Activated CD4-positive, alpha-beta memory T cell treated with anti-CD3 and anti-CD28 coated beads for 36 hours (primary cell): ENCODE measurements at regions of chr19 and their contacts with region 1.

Region 1: GRCh38 chr19:18058208-18059030 is 28.3 kb downstream of the IL12RB1 start:
- DNase-seq: peak; percentile 87
- H3K4me3 Mint-ChIP-seq: peak overlapping the region; percentile 29
- H3K27ac Mint-ChIP-seq: peak overlapping the region; percentile 58
- H3K4me1 Mint-ChIP-seq: peaks cover 14% of the 10 kb centered on the region
- H3K27me3 Mint-ChIP-seq: no peaks in the 10 kb centered on the region

Region 2: DNA sequence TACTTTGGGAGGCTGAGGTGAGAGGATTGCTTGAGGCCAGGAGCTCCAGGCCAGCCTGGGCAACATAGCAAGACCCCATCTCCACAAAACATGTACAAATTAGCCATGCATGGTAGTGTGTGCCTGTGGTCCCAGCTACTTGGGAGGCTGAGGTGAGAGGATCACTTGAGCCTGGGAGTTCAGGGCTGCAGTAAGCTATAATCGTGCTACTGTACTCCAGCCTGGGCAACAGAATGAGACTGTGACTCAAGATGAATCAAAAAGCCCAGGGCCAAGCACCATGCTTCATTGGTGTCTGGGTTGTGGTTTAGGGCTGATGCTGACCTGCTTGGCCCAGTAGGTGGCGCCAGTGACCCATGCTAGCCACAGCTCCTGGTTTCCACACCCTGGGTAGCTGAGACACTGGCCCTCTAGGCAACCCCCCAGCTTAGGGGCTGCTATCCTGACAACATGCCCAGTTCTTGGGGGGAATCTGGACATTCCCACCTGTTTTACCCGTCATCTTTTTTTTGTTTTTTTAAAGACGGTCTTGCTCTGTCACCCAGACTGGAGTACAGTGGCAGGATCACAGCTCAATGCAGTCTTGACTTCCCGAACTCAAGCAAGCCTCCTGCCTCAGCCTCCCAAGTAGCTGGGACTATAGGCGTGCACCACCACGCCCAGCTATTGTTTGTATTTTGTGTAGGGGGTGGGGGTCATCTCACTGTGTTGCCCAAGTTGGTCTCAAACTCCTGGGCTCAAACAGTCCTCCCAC is 120.2 kb before region 1 on chr19:
- CTCF ChIA-PET with region 1: interaction called, 19 read pairs
- POLR2A ChIA-PET with region 1: no interaction called
- intact Hi-C with region 1: no loop called
- DNase-seq: peak; percentile 91
- H3K4me3 Mint-ChIP-seq: no peak overlapping the region
- H3K27ac Mint-ChIP-seq: no peak overlapping the region
- H3K4me1 Mint-ChIP-seq: peaks cover 13% of the 10 kb centered on the region
- H3K27me3 Mint-ChIP-seq: no peaks in the 10 kb centered on the region

Region 3: DNA sequence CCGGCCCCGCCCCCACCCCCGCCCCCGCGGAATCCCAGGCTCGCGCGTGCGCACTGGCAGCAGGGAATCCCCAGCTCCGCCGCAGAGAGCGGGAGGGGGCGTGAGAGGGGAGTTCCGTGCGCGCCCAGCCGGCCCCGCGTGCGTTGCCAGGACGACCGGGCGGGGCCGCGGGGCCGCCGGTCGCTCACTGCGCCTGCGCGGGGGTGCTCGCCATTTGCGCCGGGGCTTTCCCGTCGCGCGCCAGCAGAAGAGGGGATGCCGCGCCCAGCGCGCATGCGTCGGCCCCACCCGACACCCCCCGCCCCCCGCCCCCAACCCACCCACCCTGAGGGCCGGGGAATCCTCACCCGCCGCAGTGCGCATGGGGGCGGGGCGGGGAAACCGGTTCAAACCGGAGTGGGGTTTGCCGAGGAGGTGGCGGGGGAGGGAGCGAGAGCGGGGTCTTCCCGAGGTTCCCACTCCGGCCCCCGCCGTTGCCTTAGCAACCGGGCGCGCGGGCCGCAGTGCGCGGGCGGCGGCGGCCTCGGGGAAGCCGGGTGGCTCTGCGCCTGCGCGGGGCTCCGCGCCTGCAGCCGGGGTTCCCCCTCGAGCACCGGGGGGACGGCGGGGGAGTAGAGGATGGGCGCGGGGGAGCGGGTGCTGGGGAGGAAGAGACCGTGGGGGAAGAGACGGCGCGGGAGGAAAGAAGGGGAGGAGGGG is 110.5 kb before region 1 on chr19:
- CTCF ChIA-PET with region 1: interaction called, 4 read pairs
- POLR2A ChIA-PET with region 1: interaction called, 3 read pairs
- intact Hi-C with region 1: loop called (anchors 5 kb)
- DNase-seq: peak; percentile 96
- H3K4me3 Mint-ChIP-seq: peak overlapping the region; percentile 52
- H3K27ac Mint-ChIP-seq: peak overlapping the region; percentile 86
- H3K4me1 Mint-ChIP-seq: peaks cover 45% of the 10 kb centered on the region
- H3K27me3 Mint-ChIP-seq: peaks cover 38% of the 10 kb centered on the region

Region 4: GRCh38 chr19:18000935-18001778 is 57.3 kb before region 1 on chr19:
- CTCF ChIA-PET with region 1: interaction called, 122 read pairs
- POLR2A ChIA-PET with region 1: interaction called, 3 read pairs
- intact Hi-C with region 1: no loop called
- DNase-seq: peak; percentile 95
- H3K4me3 Mint-ChIP-seq: peak overlapping the region; percentile 87
- H3K27ac Mint-ChIP-seq: peak overlapping the region; percentile 97
- H3K4me1 Mint-ChIP-seq: peaks cover 22% of the 10 kb centered on the region
- H3K27me3 Mint-ChIP-seq: no peaks in the 10 kb centered on the region

Region 5: GRCh38 chr19:18007044-18007916 is 51.1 kb before region 1 on chr19:
- CTCF ChIA-PET with region 1: interaction called, 122 read pairs
- POLR2A ChIA-PET with region 1: interaction called, 10 read pairs
- intact Hi-C with region 1: loop called (anchors 1 kb)
- DNase-seq: peak; percentile 88
- H3K4me3 Mint-ChIP-seq: peak overlapping the region; percentile 83
- H3K27ac Mint-ChIP-seq: peak overlapping the region; percentile 82
- H3K4me1 Mint-ChIP-seq: peaks cover 35% of the 10 kb centered on the region
- H3K27me3 Mint-ChIP-seq: no peaks in the 10 kb centered on the region

Region 6: DNA sequence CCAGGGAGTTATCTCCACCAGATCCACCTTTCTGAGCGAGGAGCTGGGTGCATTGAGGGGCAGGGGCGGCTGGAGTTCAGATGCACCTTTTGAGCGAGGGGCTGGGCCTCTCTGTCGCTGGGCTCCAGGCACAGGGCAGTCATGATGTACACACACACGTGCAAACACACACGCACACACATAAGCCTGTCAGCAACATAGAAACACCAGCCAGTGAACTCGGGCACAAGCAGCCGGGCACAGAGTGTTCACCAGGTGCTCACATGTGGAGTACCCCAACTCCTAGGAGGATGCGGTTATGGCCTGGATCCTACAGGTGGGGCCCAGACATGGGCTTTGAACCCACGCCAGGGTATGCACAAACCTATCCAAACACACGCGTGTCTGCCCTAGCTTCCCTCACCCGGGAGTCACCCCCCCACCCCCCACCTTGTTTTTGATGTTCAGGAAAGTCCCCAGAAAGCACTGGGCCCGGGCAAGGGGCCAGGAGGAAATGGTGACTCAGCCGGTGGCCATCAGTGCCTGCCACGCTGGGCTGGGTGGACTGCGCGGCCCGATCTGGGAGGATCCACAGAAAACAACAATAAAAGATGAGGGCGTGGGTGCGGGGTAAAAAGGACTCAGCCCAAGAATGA is 37.2 kb before region 1 on chr19:
- CTCF ChIA-PET with region 1: interaction called, 6 read pairs
- POLR2A ChIA-PET with region 1: interaction called, 5 read pairs
- intact Hi-C with region 1: loop called (anchors 5 kb)
- DNase-seq: peak; percentile 84
- H3K4me3 Mint-ChIP-seq: peak overlapping the region; percentile 76
- H3K27ac Mint-ChIP-seq: peak overlapping the region; percentile 95
- H3K4me1 Mint-ChIP-seq: peaks cover 58% of the 10 kb centered on the region
- H3K27me3 Mint-ChIP-seq: no peaks in the 10 kb centered on the region

Region 7: GRCh38 chr19:18044825-18045304 is 13.6 kb before region 1 on chr19:
- CTCF ChIA-PET with region 1: interaction called, 9 read pairs
- POLR2A ChIA-PET with region 1: interaction called, 3 read pairs
- intact Hi-C with region 1: loop called (anchors 1 kb)
- DNase-seq: peak; percentile 97
- H3K4me3 Mint-ChIP-seq: peak overlapping the region; percentile 50
- H3K27ac Mint-ChIP-seq: peak overlapping the region; percentile 75
- H3K4me1 Mint-ChIP-seq: peaks cover 37% of the 10 kb centered on the region
- H3K27me3 Mint-ChIP-seq: peaks cover 2% of the 10 kb centered on the region